Sciatic nerve (tissue), 2 donors: ENCODE measurements at regions of chr7 and their contacts with region 1.

Region 1: DNA sequence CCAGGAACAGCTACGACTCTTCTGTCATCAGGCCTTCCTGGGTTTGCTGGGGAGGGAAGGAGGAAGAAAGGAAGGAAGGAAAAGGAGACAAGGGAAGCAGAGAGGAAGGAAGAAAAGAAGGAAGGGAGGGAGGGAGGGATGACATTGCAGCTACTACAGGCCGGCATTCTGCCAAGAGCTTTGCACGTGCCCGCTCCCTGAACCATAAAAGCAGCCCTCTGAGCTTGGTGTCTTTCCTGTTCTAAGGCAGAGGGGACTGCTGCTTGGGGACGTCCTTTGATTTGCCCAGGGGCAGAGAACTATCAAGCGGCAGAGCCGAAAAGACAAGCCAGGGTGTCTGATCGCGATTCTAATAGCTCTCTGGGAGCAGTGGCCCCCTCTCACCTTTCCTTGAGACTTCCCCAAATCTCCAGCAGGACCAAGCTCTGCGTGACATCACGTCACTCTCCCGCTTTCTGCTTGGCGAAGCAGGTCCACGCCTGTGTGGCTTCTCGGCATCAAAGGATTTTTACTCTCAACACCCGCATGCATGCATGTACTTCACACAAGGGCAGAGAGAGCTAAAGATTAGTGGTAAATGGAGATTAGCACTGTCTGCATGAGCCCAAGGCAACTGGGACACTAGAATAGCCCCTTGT is 167.8 kb upstream of the AUTS2 start:
- DNase-seq: peak; percentile 68
- ATAC-seq: peak; percentile 68

Region 2: GRCh38 chr7:69476416-69476815 is 45.9 kb after region 1 on chr7:
- intact Hi-C with region 1: no loop called
- DNase-seq: no peak
- ATAC-seq: peak; percentile 82

Region 3: GRCh38 chr7:69564454-69565417 is 134.2 kb after region 1 on chr7:
- intact Hi-C with region 1: no loop called
- DNase-seq: no peak
- ATAC-seq: peak; percentile 70

Region 4: DNA sequence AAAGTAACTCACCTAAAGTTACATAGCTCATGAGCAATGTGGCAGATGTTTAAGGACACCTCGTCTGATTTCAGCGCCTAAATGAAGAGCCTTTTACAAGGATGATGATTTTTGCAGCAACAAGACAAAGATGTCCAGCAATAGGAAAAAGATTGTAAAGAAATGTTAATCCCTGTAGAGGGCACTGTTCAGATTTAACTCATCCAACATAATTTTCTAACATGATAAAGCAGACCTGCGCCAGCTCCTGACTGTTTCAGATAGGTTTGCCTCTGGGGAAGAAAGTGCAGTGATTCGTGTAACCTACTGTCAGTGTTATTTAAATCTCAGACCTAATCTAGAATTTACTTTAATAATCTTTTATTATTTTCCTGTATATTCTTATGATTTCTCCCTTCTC is 763.0 kb after region 1 on chr7:
- intact Hi-C with region 1: loop called (anchors 5 kb)
- DNase-seq: no peak
- ATAC-seq: no peak